Astrocyte of the cerebellum (primary cell): ENCODE measurements at regions of chr20 and their contacts with region 1.

Region 1: DNA sequence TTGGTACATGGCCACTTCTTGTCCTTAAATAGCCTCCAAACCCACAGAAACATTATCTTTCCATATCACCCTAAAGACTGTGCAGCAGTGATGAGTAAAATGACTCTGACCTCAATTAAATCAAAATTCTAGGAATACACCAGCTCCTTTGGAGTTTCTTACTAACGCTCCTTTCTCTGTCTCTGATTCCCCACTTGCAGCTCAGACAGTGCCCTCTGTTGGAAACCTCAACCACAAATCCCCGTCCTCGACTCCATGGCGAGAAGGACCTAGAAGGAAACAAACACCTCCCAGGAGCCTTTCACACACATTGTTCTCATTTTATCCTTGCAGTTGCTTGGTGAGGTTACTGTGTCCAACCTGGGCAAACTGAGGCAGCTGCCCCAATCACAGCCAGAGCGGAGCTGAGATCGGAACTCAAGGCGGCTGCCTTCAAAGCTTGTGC is 17.7 kb upstream of the PARD6B start:
- DNase-seq: peak; percentile 35
- H3K4me3 ChIP-seq: no peak overlapping the region
- CTCF ChIP-seq: peak; percentile 64

Region 2: DNA sequence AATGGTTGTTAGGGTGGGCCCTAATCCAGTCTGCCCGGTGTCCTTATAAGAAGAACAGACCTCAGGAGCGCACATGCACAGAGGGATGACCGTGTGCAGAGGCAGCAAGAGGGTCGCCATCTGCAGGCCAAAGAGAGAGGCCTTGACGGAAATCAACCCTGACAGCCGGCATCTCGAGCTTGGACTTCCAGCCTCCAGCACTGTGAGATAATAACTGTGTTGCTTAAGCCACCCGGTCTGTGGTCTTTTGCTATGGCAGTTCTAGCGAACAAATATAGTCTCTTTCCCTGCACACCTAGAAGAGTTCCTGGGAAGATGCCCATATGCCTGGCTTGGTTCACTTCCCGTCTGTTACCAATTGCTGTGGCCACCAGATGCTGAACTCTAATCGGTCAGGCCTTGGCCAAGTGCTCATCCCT is 1110.5 kb before region 1 on chr20:
- in situ Hi-C with region 1: no loop called
- DNase-seq: no peak
- H3K4me3 ChIP-seq: no peak overlapping the region
- CTCF ChIP-seq: peak; percentile 65

Region 3: DNA sequence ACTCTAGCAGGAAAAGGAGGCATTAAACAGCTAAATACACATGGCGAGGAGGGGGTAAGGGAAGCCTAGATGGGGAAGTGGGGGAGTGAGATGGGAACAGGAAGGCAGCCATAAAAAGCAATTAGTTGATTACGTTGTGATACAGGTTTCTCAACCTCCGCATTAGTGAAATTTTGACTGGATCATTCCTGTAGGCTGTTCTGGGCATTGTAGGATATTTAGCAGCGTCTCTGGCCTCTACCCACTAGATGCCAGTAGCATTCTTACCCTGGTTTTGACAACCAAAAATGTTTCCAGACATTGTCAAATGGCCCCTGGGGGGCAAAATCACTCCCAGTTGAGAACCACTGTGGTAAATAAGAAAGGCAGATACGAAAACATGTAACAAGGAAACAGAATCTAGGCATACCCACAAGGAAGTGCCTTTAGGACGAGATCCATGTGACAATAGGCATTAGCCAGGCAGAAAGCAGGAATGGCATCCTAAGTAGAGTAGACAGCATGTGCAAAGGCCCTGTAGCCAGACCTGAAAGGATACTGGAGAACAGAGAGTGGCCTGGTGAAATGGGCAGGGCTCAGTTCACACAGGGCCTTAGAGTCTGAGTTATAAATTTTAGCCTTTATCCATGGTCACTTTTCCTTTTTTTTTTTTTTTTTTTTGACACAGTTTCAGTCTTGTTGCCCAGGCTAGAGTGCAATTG is 229.3 kb before region 1 on chr20:
- in situ Hi-C with region 1: loop called (anchors 10 kb)
- DNase-seq: no peak
- H3K4me3 ChIP-seq: no peak overlapping the region
- CTCF ChIP-seq: no peak

Region 4: GRCh38 chr20:50624270-50625016 is 89.2 kb before region 1 on chr20:
- in situ Hi-C with region 1: loop called (anchors 5 kb)
- DNase-seq: no peak
- H3K4me3 ChIP-seq: no peak overlapping the region
- CTCF ChIP-seq: no peak

Region 5: GRCh38 chr20:50655311-50655880 is 58.3 kb before region 1 on chr20:
- in situ Hi-C with region 1: no loop called
- DNase-seq: no peak
- H3K4me3 ChIP-seq: no peak overlapping the region
- CTCF ChIP-seq: no peak

Region 6: GRCh38 chr20:50668326-50668725 is 45.4 kb before region 1 on chr20:
- in situ Hi-C with region 1: loop called (anchors 5 kb)
- DNase-seq: no peak
- H3K4me3 ChIP-seq: no peak overlapping the region
- CTCF ChIP-seq: no peak

Region 7: DNA sequence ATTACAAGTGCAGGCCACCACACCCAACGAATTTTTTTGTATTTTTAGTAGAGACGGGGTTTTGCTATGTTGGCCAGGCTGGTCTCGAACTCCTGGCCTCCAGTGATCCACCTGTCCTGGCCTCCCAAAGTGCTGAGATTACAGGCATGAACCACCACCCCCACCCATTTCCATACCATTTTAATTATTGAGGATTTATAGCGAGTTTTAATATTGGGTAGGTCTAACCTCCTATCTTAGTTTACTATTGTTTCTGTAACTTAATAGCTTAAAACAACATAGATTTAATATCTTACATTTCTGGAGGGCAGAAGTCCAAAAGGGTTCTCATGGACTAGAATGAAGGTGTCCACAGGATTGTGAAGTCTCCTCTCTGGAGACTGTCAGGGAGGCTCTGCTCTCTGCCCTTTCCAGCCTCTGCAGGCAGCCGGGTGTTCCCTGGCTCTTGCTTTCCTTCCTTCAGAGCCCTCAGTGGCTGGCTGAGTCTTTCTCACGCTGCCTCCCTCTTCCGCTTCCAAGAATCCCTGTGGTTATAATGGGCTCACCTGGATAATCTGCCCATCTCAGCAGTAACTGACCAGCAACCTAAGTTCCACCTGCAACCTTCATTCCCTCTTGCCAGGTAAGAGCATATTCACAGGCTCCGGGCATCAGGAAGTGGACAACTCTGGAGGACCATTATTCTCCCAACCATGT is 62.6 kb after region 1 on chr20:
- in situ Hi-C with region 1: no loop called
- DNase-seq: no peak
- H3K4me3 ChIP-seq: no peak overlapping the region
- CTCF ChIP-seq: no peak

Region 8: DNA sequence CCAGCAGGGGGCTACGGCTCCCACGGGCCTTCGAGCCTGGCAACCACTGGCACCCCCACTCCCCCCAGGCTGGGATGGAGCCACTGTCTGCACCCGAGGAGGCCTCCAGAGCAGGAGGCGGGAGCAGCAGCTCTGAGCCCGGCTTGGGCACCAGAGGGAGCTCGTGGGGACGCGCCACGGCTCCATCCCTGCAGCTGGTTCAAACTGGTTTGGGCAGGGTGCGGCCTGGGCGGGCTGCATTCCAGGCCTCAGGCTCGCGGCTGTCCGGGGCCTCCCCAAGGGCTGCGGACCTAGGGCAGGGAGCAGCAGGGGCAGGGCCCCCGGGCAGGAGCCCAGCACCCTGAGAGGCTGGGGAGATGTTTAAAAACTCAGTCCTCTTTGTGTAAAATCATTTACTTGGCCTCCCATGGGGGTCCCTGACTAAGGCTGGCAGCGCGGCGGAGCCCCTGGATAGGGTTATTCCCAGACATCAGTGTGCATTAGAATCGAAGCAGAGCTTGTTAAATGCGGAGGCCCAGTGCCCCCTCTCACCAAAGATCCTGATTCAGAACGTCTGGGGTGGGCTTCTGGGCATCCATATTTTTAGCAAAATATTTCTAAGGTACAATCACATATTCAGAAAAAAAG is 77.1 kb after region 1 on chr20:
- in situ Hi-C with region 1: no loop called
- DNase-seq: peak; percentile 60
- H3K4me3 ChIP-seq: no peak overlapping the region
- CTCF ChIP-seq: peak; percentile 87